ENCODE measurements at regions of chr15 and their contacts with region 1.

Region 1: GRCh38 chr15:75723847-75724660 is 11.4 kb upstream of the CSPG4 start:
- DNase-seq: peak; percentile 80
- H3K4me3 ChIP-seq: no peak overlapping the region
- H3K4me3 Mint-ChIP-seq: no peak overlapping the region
- H3K27ac Mint-ChIP-seq: peak overlapping the region; percentile 76
- H3K4me1 ChIP-seq: peaks cover 10% of the 10 kb centered on the region
- H3K4me1 Mint-ChIP-seq: no peaks in the 10 kb centered on the region
- H3K27me3 ChIP-seq: no peaks in the 10 kb centered on the region
- H3K27me3 Mint-ChIP-seq: no peaks in the 10 kb centered on the region
- CTCF ChIP-seq: no peak

Region 2: GRCh38 chr15:75921729-75922703 is 198.0 kb after region 1 on chr15:
- CTCF ChIA-PET with region 1: interaction called, 3 read pairs
- POLR2A ChIA-PET with region 1: no interaction called
- intact Hi-C with region 1: loop called (anchors 10 kb)
- DNase-seq: peak; percentile 44 to 62
- H3K4me3 ChIP-seq: no peak overlapping the region
- H3K4me3 Mint-ChIP-seq: no peak overlapping the region
- H3K27ac Mint-ChIP-seq: no peak overlapping the region
- H3K4me1 ChIP-seq: peaks cover 16% of the 10 kb centered on the region; the same call in 1 of the 2 replicates
- H3K4me1 Mint-ChIP-seq: peaks cover 15% of the 10 kb centered on the region
- H3K27me3 ChIP-seq: no peaks in the 10 kb centered on the region
- H3K27me3 Mint-ChIP-seq: no peaks in the 10 kb centered on the region
- CTCF ChIP-seq: peak; percentile 42 to 59

Measured in Caco-2 (cell line).